ENCODE measurements at regions of chr9 and their contacts with region 1.

Region 1: GRCh38 chr9:35829084-35829763 is at the start of gene TMEM8B:
- DNase-seq: peak in 1 of 2 experiments; percentile 96
- H3K4me3 ChIP-seq: peak within 1 kb of the TSS; percentile 51 to 83 (median 68)
- H3K27ac ChIP-seq: no peak within 1 kb of the TSS; the same call in 1 of the 2 replicates
- H3K4me1 ChIP-seq: peaks cover 1 to 13% (median 6%) of the 10 kb centered on the region in 4 experiments
- H3K27me3 ChIP-seq: no peaks in the 10 kb centered on the region
- CTCF ChIP-seq: no peak
- EP300 ChIP-seq: no peak
- POLR2A ChIP-seq: no peak
- RAD21 ChIP-seq: no peak
- total RNA-seq, gene TMEM8B: 5.7 and 7.5 TPM in 2 replicates

Region 2: DNA sequence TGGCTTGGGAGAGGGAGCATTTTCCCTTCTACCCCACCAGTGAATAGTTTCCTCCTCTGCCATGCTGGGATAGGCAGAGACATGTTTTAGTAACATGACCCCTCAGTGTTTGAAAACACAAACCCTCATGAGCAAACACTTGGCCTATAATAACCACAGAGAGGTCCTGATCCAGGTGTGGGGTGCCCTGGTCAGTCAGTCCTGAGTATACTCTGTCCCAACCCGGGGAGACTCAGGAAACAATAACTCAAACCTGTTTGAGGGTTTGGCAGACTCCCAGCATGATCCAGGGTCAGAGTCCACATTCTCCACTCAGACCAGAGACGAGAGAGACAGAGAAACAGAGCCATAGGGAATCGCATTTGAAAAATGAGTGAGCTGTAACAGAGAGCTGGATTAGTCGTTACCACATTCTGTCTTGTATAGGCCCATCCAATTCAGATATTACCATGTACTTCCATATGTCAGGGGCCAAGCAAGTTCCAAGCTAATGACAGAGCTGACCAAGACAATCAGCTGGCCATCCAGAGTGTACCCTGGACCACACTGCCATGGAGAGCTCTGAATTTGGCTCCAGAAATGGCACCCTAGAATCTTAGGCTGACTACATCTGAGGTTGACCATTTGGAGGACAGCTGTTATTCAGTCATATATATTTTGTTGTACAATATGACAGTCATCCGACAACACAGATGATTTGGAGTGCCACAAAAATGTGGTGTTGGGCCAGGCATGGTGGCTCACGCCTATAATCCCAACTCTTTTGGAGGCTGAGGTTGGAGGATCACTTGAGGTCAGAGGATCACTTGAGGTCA is 159.7 kb before region 1 on chr9:
- CTCF ChIA-PET with region 1: no interaction called
- POLR2A ChIA-PET with region 1: no interaction called
- DNase-seq: no peak
- H3K4me3 ChIP-seq: no peak overlapping the region
- H3K27ac ChIP-seq: no peak overlapping the region
- H3K4me1 ChIP-seq: peaks cover 0 to 3% (median under 1%) of the 10 kb centered on the region in 4 experiments; a peak in 5 of 7 replicates
- H3K27me3 ChIP-seq: peaks cover 0 to 3% (median 0%) of the 10 kb centered on the region in 4 experiments; a peak in 4 of 7 replicates
- CTCF ChIP-seq: no peak
- EP300 ChIP-seq: no peak
- POLR2A ChIP-seq: no peak
- RAD21 ChIP-seq: no peak

Region 3: DNA sequence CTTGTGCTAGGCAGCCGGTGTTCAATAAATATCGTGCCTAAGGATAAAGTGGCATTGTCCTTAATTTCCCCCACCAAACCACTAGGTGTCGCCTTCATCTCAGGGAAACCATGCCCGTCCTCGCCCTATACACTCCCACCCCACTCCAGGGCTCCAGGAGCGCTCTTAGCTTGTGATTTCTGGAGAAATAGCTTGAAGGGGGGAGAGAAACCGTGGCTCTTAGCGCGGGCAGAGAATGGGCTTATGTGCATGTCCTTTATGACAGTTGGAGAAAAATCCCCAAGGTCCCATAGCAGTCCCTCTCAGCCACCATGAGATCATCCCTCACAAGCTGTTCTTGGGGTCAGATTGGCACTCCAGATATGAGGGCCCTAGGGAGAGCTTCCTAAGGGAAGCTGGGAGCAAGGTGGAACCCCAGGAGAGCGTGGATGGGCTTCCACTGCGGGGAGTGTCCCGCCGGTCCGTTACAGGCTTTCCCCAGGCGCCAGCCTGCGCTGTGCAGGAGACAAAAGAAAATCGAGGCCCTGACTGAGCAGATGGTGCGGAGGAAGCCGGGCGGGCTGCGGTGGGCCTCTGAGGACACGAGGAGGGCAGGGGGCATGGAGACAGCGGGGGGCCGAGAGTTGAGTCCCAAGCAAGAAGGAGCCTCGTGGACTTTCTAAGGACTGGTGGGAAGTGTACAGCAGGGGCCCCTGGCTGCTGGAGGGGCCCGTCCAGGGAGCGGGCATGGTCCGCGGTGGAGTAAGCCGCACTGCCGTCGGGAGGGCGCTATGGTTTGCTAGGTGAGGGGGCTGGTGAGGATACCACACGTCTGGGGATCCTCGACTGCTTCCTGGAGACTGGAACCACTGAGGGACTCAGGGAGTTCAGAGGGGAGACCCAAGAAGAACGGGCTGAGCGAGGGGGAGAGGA is 38.6 kb before region 1 on chr9:
- CTCF ChIA-PET with region 1: interaction called, 62 read pairs
- POLR2A ChIA-PET with region 1: interaction called, 6 read pairs
- DNase-seq: peak in 1 of 2 experiments; percentile 78
- H3K4me3 ChIP-seq: peak overlapping the region; percentile 39 to 65 (median 52); a peak in 7 of 8 replicates
- H3K27ac ChIP-seq: no peak overlapping the region
- H3K4me1 ChIP-seq: peaks cover 5 to 13% (median 7%) of the 10 kb centered on the region in 4 experiments; a peak in 6 of 7 replicates
- H3K27me3 ChIP-seq: peaks cover 0 to 10% (median 0%) of the 10 kb centered on the region in 4 experiments; a peak in 4 of 7 replicates
- CTCF ChIP-seq: peak; percentile 79 to 92 (median 90)
- EP300 ChIP-seq: no peak
- POLR2A ChIP-seq: no peak
- RAD21 ChIP-seq: peak; percentile 94

Region 4: GRCh38 chr9:35805551-35805950 is 23.7 kb before region 1 on chr9:
- CTCF ChIA-PET with region 1: interaction called, 115 read pairs
- POLR2A ChIA-PET with region 1: interaction called, 4 read pairs
- DNase-seq: no peak
- H3K4me3 ChIP-seq: no peak overlapping the region
- H3K27ac ChIP-seq: no peak overlapping the region
- H3K4me1 ChIP-seq: no peaks in the 10 kb centered on the region
- H3K27me3 ChIP-seq: no peaks in the 10 kb centered on the region
- CTCF ChIP-seq: no peak
- EP300 ChIP-seq: no peak
- POLR2A ChIP-seq: no peak
- RAD21 ChIP-seq: no peak

Region 5: GRCh38 chr9:35844716-35845270 is 15.6 kb after region 1 on chr9:
- CTCF ChIA-PET with region 1: interaction called, 172 read pairs
- POLR2A ChIA-PET with region 1: interaction called, 18 read pairs
- DNase-seq: no peak
- H3K4me3 ChIP-seq: peak overlapping the region in 1 of 4 experiments; percentile 70; a peak in 2 of 8 replicates
- H3K27ac ChIP-seq: no peak overlapping the region
- H3K4me1 ChIP-seq: peaks cover 11 to 25% (median 14%) of the 10 kb centered on the region in 4 experiments
- H3K27me3 ChIP-seq: peaks cover 0 to 12% (median 9%) of the 10 kb centered on the region in 4 experiments; a peak in 6 of 7 replicates
- CTCF ChIP-seq: no peak
- EP300 ChIP-seq: no peak
- POLR2A ChIP-seq: no peak
- RAD21 ChIP-seq: no peak

Region 6: GRCh38 chr9:35882263-35882848 is 53.1 kb after region 1 on chr9:
- CTCF ChIA-PET with region 1: interaction called, 78 read pairs
- POLR2A ChIA-PET with region 1: interaction called, 4 read pairs
- DNase-seq: peak; percentile 46 to 91
- H3K4me3 ChIP-seq: no peak overlapping the region
- H3K27ac ChIP-seq: no peak overlapping the region
- H3K4me1 ChIP-seq: no peaks in the 10 kb centered on the region; a peak in 2 of 7 replicates
- H3K27me3 ChIP-seq: no peaks in the 10 kb centered on the region
- CTCF ChIP-seq: peak; percentile 92 to 96 (median 95)
- EP300 ChIP-seq: no peak
- POLR2A ChIP-seq: no peak
- RAD21 ChIP-seq: peak; percentile 83 to 91

Measured in H1 (cell line).